ENCODE measurements at regions of chr5 and their contacts with region 1.

Region 1: GRCh38 chr5:93607367-93608258 is 24.6 kb downstream of the NR2F1 start:
- DNase-seq: no peak
- H3K4me3 ChIP-seq: peak overlapping the region; percentile 48
- H3K27ac ChIP-seq: peak overlapping the region; percentile 75
- H3K27me3 ChIP-seq: peaks cover 21% of the 10 kb centered on the region
- CTCF ChIP-seq: peak; percentile 68

Region 2: GRCh38 chr5:93257616-93258015 is 350.0 kb before region 1 on chr5:
- CTCF ChIA-PET with region 1: no interaction called
- POLR2A ChIA-PET with region 1: no interaction called
- DNase-seq: no peak
- H3K4me3 ChIP-seq: no peak overlapping the region
- H3K27ac ChIP-seq: no peak overlapping the region
- H3K27me3 ChIP-seq: no peaks in the 10 kb centered on the region
- CTCF ChIP-seq: no peak

Region 3: GRCh38 chr5:93519740-93520139 is 87.9 kb before region 1 on chr5:
- CTCF ChIA-PET with region 1: no interaction called
- POLR2A ChIA-PET with region 1: no interaction called
- DNase-seq: no peak
- H3K4me3 ChIP-seq: no peak overlapping the region
- H3K27ac ChIP-seq: no peak overlapping the region
- H3K27me3 ChIP-seq: no peaks in the 10 kb centered on the region
- CTCF ChIP-seq: no peak

Region 4: DNA sequence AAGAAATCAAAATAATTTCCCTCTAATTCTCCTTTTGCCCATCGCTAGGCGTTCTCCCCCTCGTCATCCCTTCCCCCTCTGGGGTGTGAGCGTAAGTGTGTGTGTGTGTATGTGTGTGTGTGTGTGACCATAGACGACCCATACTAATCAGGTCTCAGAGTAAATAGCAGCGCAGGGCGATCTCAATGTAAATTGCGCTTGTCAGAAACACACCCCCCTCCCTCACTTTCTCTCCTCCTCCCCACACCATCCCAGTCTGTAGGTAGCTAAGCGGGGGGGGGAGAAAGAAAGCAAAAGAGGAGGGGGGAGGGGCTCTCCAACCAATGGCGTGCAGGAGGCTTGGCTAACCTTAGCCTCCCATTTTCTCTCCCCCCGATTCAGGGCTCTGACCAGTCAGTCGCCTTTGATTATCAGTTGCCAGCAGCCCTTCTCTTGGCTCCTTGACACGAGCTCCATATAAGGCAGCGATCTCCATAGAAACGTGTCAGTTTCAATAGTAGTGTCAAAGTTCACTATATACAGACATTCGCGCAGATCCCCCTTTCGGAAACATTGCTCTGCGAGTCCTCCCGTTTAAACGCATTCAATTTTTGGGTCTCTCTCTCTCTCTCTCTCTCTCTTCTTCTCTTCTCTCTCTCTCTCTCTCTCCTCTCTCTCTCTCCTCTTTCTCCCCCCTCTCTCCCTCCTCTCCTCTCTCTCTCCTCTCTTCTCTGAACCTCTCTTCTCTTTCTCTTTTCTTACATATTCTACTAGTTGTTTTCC is 24.8 kb before region 1 on chr5 and contains the start of gene NR2F1:
- CTCF ChIA-PET with region 1: interaction called, 13 read pairs
- POLR2A ChIA-PET with region 1: no interaction called
- DNase-seq: peak; percentile 99
- H3K4me3 ChIP-seq: peak within 1 kb of the TSS; percentile 92
- H3K27ac ChIP-seq: peak within 1 kb of the TSS; percentile 81
- H3K27me3 ChIP-seq: no peaks in the 10 kb centered on the region
- CTCF ChIP-seq: no peak
- polyA plus RNA-seq, gene NR2F1: 47.9 and 65.5 TPM in 2 replicates

Region 5: GRCh38 chr5:93589829-93590215 is 17.8 kb before region 1 on chr5:
- CTCF ChIA-PET with region 1: interaction called, 13 read pairs
- POLR2A ChIA-PET with region 1: interaction called, 6 read pairs
- DNase-seq: no peak
- H3K4me3 ChIP-seq: peak overlapping the region; percentile 92
- H3K27ac ChIP-seq: no peak overlapping the region
- H3K27me3 ChIP-seq: no peaks in the 10 kb centered on the region
- CTCF ChIP-seq: no peak

Region 6: GRCh38 chr5:93620487-93621326 is 13.1 kb after region 1 on chr5:
- CTCF ChIA-PET with region 1: interaction called, 38 read pairs
- POLR2A ChIA-PET with region 1: interaction called, 4 read pairs
- DNase-seq: no peak
- H3K4me3 ChIP-seq: peak overlapping the region; percentile 72
- H3K27ac ChIP-seq: peak overlapping the region; percentile 59
- H3K27me3 ChIP-seq: no peaks in the 10 kb centered on the region
- CTCF ChIP-seq: no peak

Region 7: GRCh38 chr5:93789173-93790070 is 181.8 kb after region 1 on chr5:
- CTCF ChIA-PET with region 1: interaction called, 10 read pairs
- POLR2A ChIA-PET with region 1: no interaction called
- DNase-seq: peak; percentile 18
- H3K4me3 ChIP-seq: no peak overlapping the region
- H3K27ac ChIP-seq: no peak overlapping the region
- H3K27me3 ChIP-seq: no peaks in the 10 kb centered on the region
- CTCF ChIP-seq: peak; percentile 24

Region 8: GRCh38 chr5:94240993-94241651 is 633.5 kb after region 1 on chr5:
- CTCF ChIA-PET with region 1: no interaction called
- POLR2A ChIA-PET with region 1: no interaction called
- DNase-seq: no peak
- H3K4me3 ChIP-seq: no peak overlapping the region
- H3K27ac ChIP-seq: no peak overlapping the region
- H3K27me3 ChIP-seq: no peaks in the 10 kb centered on the region
- CTCF ChIP-seq: no peak